BJ (cell line): ENCODE measurements at regions of chr22 and their contacts with region 1.

Region 1: DNA sequence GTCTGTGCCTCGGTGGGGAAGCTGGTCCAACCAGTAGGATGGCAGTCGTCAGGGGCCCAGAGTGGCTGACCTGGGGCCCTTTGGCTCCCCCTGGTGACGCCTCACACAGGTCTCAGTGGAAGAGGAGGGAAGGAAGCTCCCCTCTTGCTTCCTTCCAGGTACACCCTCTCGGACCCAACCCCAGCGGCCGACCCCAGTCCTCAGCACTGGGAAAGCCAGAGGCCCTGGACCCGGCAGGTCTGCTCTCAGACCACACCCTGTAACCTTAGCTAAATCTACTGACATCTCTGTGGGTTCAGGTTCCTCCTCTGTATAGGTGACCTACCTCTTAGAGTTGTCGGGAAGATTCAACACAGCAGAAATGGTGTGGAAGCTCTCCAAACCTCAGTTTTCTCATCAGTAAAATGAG is 3.4 kb upstream of the SCUBE1 start:
- DNase-seq: no peak
- H3K4me3 ChIP-seq: no peak overlapping the region
- H3K27me3 ChIP-seq: peaks cover 26% of the 10 kb centered on the region
- CTCF ChIP-seq: peak; percentile 75

Region 2: DNA sequence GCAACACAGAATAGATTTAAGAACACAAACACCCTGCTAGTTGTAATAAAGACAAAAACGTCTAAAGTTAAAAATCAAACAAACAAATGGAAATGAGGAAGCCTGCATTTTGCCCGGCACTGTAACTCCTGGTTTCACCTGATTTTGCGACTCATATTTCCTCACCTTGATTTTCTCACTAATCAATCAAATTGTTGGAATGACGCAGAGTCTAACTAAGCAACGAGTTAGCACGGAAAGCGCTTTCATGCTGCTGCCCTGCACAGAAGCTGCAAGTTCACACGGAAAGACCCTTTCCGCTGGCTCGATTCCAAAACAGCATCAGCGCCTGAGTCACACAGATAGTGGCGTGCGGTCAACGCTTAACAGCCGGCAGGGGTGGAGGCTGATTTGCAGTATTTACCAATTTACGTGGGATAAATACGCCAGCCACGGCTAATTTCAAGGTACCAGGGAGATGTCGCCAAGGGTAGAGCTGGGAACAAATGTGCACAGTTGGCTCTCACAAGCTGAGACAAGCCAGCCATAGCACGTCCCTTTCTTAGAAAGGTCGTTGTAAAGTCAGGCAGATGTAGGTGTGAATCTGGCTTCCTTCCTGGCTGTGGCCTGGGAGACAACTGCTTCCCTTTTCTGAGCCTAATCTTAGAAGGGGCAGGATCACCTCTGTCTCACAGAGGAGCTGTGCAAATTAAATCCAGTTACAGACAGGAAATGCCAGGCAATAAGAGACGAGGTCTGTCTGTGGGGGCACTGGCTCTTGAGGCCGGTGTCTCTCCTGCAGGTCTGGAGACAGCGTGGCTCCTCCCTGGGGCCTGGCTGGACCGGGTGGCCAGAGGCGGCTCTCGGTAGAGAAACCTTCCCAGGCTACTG is 82.6 kb before region 1 on chr22:
- CTCF ChIA-PET with region 1: interaction called, 17 read pairs
- POLR2A ChIA-PET with region 1: no interaction called
- DNase-seq: no peak
- H3K4me3 ChIP-seq: no peak overlapping the region
- H3K27me3 ChIP-seq: peaks cover 14% of the 10 kb centered on the region
- CTCF ChIP-seq: no peak

Region 3: GRCh38 chr22:43287441-43287840 is 59.1 kb before region 1 on chr22:
- CTCF ChIA-PET with region 1: interaction called, 18 read pairs
- POLR2A ChIA-PET with region 1: no interaction called
- DNase-seq: no peak
- H3K4me3 ChIP-seq: no peak overlapping the region
- H3K27me3 ChIP-seq: peaks cover 7% of the 10 kb centered on the region; the same call in 1 of the 2 replicates
- CTCF ChIP-seq: no peak

Region 4: GRCh38 chr22:43331069-43331451 is 15.5 kb before region 1 on chr22:
- CTCF ChIA-PET with region 1: interaction called, 12 read pairs
- POLR2A ChIA-PET with region 1: no interaction called
- DNase-seq: no peak
- H3K4me3 ChIP-seq: no peak overlapping the region
- H3K27me3 ChIP-seq: peaks cover 2% of the 10 kb centered on the region
- CTCF ChIP-seq: no peak

Region 5: DNA sequence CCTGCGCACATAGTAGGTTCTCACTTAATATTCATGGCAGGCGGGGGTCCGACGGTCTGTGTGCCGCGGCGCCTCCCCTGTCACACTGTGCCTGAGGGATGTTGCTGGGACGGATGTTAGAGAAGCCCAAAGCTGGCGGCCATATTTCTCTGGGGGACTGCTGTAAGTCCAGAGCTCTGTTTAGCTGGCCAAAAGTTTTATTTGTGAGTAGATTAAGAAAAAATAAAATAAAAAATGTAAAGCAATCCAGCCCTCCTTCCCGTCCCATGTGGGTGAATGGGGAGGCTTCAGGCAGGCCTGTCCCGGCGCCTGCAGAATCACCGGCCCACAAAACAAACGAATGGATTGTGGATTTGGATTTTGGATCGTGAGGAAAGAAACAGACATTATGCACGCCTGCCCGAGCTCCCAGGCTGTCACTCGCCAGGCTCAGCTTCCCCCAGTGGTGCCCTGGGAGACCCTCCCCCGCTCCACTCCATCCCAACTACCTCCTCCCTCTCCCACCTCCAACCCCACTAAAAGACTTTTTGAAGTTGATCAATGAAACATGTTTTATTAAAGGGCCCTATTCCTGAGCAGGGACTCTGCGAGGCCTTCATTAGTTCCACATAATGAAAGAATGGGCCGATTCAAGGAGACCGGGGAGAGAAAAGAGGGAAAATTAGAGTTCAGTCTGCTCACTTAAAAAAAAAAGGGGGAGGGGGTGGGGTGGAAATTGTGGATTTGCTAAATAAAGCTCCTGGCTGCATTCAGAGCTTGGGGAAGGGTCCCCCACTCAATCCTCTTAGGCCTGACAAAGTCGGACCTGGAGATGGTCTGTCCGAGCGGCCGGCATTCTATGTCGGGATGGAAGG is 17.0 kb after region 1 on chr22:
- CTCF ChIA-PET with region 1: interaction called, 28 read pairs
- POLR2A ChIA-PET with region 1: no interaction called
- DNase-seq: no peak
- H3K4me3 ChIP-seq: no peak overlapping the region
- H3K27me3 ChIP-seq: no peaks in the 10 kb centered on the region; the same call in 1 of the 2 replicates
- CTCF ChIP-seq: no peak